OCI-LY7 (cell line): ENCODE measurements at regions of chr14 and their contacts with region 1.

Region 1: GRCh38 chr14:57390028-57390805 is at the start of gene NAA30:
- DNase-seq: peak; percentile 96
- H3K4me3 ChIP-seq: peak within 1 kb of the TSS; percentile 84
- H3K27ac ChIP-seq: peak within 1 kb of the TSS; percentile 63
- H3K4me1 ChIP-seq: peaks cover 29% of the 10 kb centered on the region
- CTCF ChIP-seq: no peak
- total RNA-seq, gene NAA30: 7.3 and 7.4 TPM in 2 replicates

Region 2: GRCh38 chr14:55579724-55580469 is 1810.3 kb before region 1 on chr14 and contains the start of gene KTN1:
- CTCF ChIA-PET with region 1: no interaction called
- POLR2A ChIA-PET with region 1: no interaction called
- intact Hi-C with region 1: loop called (anchors 5 kb)
- DNase-seq: peak; percentile 89
- H3K4me3 ChIP-seq: peak within 1 kb of the TSS; percentile 94
- H3K27ac ChIP-seq: peak within 1 kb of the TSS; percentile 69
- H3K4me1 ChIP-seq: peaks cover 38% of the 10 kb centered on the region
- CTCF ChIP-seq: no peak
- total RNA-seq, gene KTN1: 60.6 and 90.0 TPM in 2 replicates

Region 3: GRCh38 chr14:56579345-56580220 is 810.6 kb before region 1 on chr14 and contains the start of gene TMEM260:
- CTCF ChIA-PET with region 1: no interaction called
- POLR2A ChIA-PET with region 1: interaction called, 4 read pairs
- intact Hi-C with region 1: loop called (anchors 2 kb)
- DNase-seq: peak; percentile 92
- H3K4me3 ChIP-seq: peak within 1 kb of the TSS; percentile 83
- H3K27ac ChIP-seq: peak within 1 kb of the TSS; percentile 11
- H3K4me1 ChIP-seq: peaks cover 12% of the 10 kb centered on the region
- CTCF ChIP-seq: peak; percentile 89
- total RNA-seq, gene TMEM260: 12.4 and 16.8 TPM in 2 replicates

Region 4: DNA sequence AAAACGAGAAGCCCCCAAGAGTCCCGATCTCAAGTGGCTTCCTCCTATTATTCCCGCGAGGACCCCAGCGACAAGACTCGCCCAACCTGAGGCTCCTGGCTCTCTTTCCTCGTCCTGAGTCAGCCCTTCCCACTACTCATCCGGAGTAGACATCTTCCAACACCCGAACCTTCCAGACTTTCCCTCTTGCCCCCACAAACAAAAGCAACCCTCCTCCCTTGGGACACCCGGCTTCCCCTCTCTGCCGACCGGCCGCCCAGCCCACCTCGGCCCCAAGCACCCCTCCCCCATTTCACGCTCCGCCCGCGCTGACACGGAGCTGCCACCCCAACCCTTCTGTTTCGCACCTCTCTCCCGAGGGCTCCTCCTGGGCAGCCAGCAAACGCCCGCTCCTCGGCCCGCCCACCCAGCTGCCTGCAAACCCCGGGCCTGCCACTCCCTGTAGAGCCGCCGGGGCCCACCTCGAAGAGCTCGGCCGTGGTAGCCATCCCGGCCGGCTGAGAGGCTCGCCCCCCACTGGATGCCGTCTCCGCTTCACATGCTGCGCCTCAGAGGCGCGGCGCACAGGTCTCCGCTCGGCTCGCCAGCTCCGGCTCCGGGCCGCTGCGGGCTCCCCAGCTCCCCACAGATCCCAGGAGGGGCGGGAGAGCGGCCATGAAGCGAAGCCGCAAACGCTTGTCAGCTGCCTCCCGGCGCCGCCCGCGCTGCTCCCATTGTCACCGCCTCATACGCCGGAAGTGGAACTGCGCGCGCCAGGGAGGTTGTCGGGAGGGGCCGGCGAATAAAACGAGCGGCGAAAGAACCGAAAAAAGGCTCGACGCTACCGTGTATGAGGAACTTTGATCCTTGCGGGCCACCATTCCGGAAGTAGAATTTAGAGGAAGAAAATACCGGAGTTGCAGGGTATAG is 121.8 kb before region 1 on chr14 and contains the starts of genes AP5M1 and EXOC5:
- CTCF ChIA-PET with region 1: no interaction called
- POLR2A ChIA-PET with region 1: interaction called, 6 read pairs
- intact Hi-C with region 1: loop called (anchors 2 kb)
- DNase-seq: peak; percentile 94
- H3K4me3 ChIP-seq: peak within 1 kb of the TSS; percentile 95
- H3K27ac ChIP-seq: peak within 1 kb of the TSS; percentile 93
- H3K4me1 ChIP-seq: peaks cover 47% of the 10 kb centered on the region
- CTCF ChIP-seq: no peak; the same call in 1 of the 2 replicates
- total RNA-seq, gene AP5M1: 13.3 and 15.8 TPM in 2 replicates
- total RNA-seq, gene EXOC5: 26.9 and 53.9 TPM in 2 replicates

Region 5: GRCh38 chr14:57464013-57464730 is 74.0 kb after region 1 on chr14:
- CTCF ChIA-PET with region 1: interaction called, 4 read pairs
- POLR2A ChIA-PET with region 1: interaction called, 3 read pairs
- intact Hi-C with region 1: loop called (anchors 1 kb)
- DNase-seq: peak; percentile 93
- H3K4me3 ChIP-seq: peak overlapping the region; percentile 42
- H3K27ac ChIP-seq: peak overlapping the region; percentile 82
- H3K4me1 ChIP-seq: peaks cover 32% of the 10 kb centered on the region
- CTCF ChIP-seq: no peak

Region 6: DNA sequence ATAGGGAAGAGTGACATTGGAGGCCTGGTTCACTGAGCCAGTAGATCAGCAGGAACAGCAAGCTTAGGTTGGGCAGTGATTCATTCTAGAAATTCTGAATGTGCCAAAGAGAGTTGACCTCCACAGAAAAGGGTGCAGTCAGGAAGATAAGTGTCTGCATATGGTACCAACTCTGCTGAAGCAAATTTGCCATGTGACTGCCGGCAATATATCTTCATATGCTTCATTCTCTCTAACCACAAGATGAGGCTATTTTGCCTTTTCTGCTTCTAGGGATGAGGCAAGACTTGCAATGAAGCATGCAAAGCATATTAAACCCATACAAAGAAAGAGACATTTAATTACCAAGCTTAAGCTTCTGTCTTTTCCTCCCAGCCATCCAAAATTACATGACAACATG is 89.8 kb after region 1 on chr14:
- CTCF ChIA-PET with region 1: no interaction called
- POLR2A ChIA-PET with region 1: interaction called, 4 read pairs
- intact Hi-C with region 1: loop called (anchors 5 kb)
- DNase-seq: peak; percentile 39
- H3K4me3 ChIP-seq: no peak overlapping the region
- H3K27ac ChIP-seq: no peak overlapping the region
- H3K4me1 ChIP-seq: peaks cover 32% of the 10 kb centered on the region
- CTCF ChIP-seq: no peak

Region 7: GRCh38 chr14:58199726-58200479 is 809.7 kb after region 1 on chr14 and contains the start of gene ACTR10:
- CTCF ChIA-PET with region 1: no interaction called
- POLR2A ChIA-PET with region 1: interaction called, 3 read pairs
- intact Hi-C with region 1: loop called (anchors 5 kb)
- DNase-seq: peak; percentile 91
- H3K4me3 ChIP-seq: peak within 1 kb of the TSS; percentile 95
- H3K27ac ChIP-seq: peak within 1 kb of the TSS; percentile 59
- H3K4me1 ChIP-seq: peaks cover 18% of the 10 kb centered on the region
- CTCF ChIP-seq: no peak
- total RNA-seq, gene ACTR10: 34.3 and 42.5 TPM in 2 replicates